ENCODE measurements at regions of chr4 and their contacts with region 1.

Region 1: GRCh38 chr4:92305148-92305877 is 1.5 kb downstream of the GRID2 start:
- DNase-seq: peak; percentile 78 to 93
- H3K4me3 ChIP-seq: peak overlapping the region; percentile 74 to 79 (median 78)
- H3K27ac ChIP-seq: peak overlapping the region; percentile 41; the same call in 1 of the 2 replicates
- H3K4me1 ChIP-seq: peaks cover 0 to 5% (median 4%) of the 10 kb centered on the region in 4 experiments; a peak in 5 of 7 replicates
- H3K27me3 ChIP-seq: no peaks in the 10 kb centered on the region
- CTCF ChIP-seq: peak in 1 of 3 experiments; percentile 17; a peak in 1 of 4 replicates
- EP300 ChIP-seq: no peak
- POLR2A ChIP-seq: peak in 1 of 2 experiments; percentile 69; a peak in 2 of 3 replicates
- RAD21 ChIP-seq: peak; percentile 3 to 30; a peak in 3 of 4 replicates

Region 2: DNA sequence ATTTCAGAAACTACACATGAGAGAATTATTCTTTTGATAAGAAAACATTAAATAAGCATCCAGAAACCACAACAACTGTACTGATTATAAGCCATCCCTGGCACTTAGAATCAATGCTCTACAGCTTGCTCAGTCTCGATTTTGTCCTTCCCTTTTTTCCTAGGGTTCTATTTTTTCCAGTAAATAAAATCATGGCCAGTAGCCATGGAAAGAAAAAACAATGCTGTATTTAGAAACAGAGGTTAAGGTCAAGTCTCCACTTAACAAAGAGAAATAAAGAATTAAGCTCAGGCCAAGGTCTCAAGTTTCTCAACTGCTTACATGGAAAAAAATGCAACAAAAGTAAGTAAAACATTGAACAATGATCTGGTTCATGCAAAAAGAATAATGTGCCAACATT is 40.3 kb before region 1 on chr4:
- CTCF ChIA-PET with region 1: no interaction called
- POLR2A ChIA-PET with region 1: interaction called, 19 read pairs
- DNase-seq: no peak
- H3K4me3 ChIP-seq: no peak overlapping the region
- H3K27ac ChIP-seq: no peak overlapping the region
- H3K4me1 ChIP-seq: no peaks in the 10 kb centered on the region; a peak in 1 of 7 replicates
- H3K27me3 ChIP-seq: peaks cover 0 to 2% (median 0%) of the 10 kb centered on the region in 4 experiments; a peak in 1 of 7 replicates
- CTCF ChIP-seq: no peak
- EP300 ChIP-seq: no peak
- POLR2A ChIP-seq: no peak
- RAD21 ChIP-seq: no peak

Region 3: GRCh38 chr4:92270908-92271307 is 34.4 kb before region 1 on chr4:
- CTCF ChIA-PET with region 1: interaction called, 9 read pairs
- POLR2A ChIA-PET with region 1: interaction called, 19 read pairs
- DNase-seq: no peak
- H3K4me3 ChIP-seq: peak overlapping the region; percentile 12 to 56 (median 24); a peak in 7 of 8 replicates
- H3K27ac ChIP-seq: peak overlapping the region; percentile 64; the same call in 1 of the 2 replicates
- H3K4me1 ChIP-seq: no peaks in the 10 kb centered on the region; a peak in 2 of 7 replicates
- H3K27me3 ChIP-seq: no peaks in the 10 kb centered on the region
- CTCF ChIP-seq: peak in 2 of 3 experiments; percentile 57 to 73; a peak in 3 of 4 replicates
- EP300 ChIP-seq: no peak
- POLR2A ChIP-seq: no peak; a peak in 1 of 3 replicates
- RAD21 ChIP-seq: peak; percentile 76 to 82

Region 4: DNA sequence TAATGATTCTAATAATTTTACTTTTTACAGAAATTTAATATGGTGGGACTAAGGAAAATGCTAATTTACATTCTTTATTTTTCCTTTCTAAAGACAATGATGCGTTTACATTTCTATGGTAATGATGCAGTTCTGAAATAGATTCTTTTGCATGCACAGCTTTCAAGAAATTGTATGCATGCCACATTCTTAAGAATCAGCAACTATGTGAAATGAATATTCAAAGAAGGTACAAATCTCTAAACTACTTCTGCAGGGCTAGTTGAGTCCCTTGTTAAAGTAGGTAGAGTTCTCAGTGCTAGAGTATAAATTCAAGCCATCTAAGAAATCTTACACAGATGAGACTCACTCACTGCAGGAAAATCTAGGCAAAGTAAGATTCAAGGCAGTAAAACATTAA is 26.0 kb before region 1 on chr4:
- CTCF ChIA-PET with region 1: interaction called, 17 read pairs
- POLR2A ChIA-PET with region 1: interaction called, 36 read pairs
- DNase-seq: no peak
- H3K4me3 ChIP-seq: peak overlapping the region in 1 of 4 experiments; percentile 97; a peak in 3 of 8 replicates
- H3K27ac ChIP-seq: peak overlapping the region; percentile 6; the same call in 1 of the 2 replicates
- H3K4me1 ChIP-seq: peaks cover 0 to 12% (median 1%) of the 10 kb centered on the region in 4 experiments; a peak in 3 of 7 replicates
- H3K27me3 ChIP-seq: peaks cover 0 to 1% (median 0%) of the 10 kb centered on the region in 4 experiments; a peak in 1 of 7 replicates
- CTCF ChIP-seq: no peak
- EP300 ChIP-seq: no peak
- POLR2A ChIP-seq: no peak
- RAD21 ChIP-seq: no peak

Region 5: GRCh38 chr4:92317047-92317446 is 11.7 kb after region 1 on chr4:
- CTCF ChIA-PET with region 1: interaction called, 8 read pairs
- POLR2A ChIA-PET with region 1: interaction called, 10 read pairs
- DNase-seq: no peak
- H3K4me3 ChIP-seq: no peak overlapping the region
- H3K27ac ChIP-seq: no peak overlapping the region
- H3K4me1 ChIP-seq: no peaks in the 10 kb centered on the region
- H3K27me3 ChIP-seq: no peaks in the 10 kb centered on the region
- CTCF ChIP-seq: no peak
- EP300 ChIP-seq: no peak
- POLR2A ChIP-seq: no peak
- RAD21 ChIP-seq: no peak

Region 6: GRCh38 chr4:92357966-92358365 is 52.7 kb after region 1 on chr4:
- CTCF ChIA-PET with region 1: no interaction called
- POLR2A ChIA-PET with region 1: no interaction called
- DNase-seq: no peak
- H3K4me3 ChIP-seq: no peak overlapping the region
- H3K27ac ChIP-seq: no peak overlapping the region
- H3K4me1 ChIP-seq: peaks cover 0 to 9% (median 4%) of the 10 kb centered on the region in 4 experiments; a peak in 4 of 7 replicates
- H3K27me3 ChIP-seq: no peaks in the 10 kb centered on the region
- CTCF ChIP-seq: no peak
- EP300 ChIP-seq: no peak
- POLR2A ChIP-seq: no peak
- RAD21 ChIP-seq: no peak

Region 7: DNA sequence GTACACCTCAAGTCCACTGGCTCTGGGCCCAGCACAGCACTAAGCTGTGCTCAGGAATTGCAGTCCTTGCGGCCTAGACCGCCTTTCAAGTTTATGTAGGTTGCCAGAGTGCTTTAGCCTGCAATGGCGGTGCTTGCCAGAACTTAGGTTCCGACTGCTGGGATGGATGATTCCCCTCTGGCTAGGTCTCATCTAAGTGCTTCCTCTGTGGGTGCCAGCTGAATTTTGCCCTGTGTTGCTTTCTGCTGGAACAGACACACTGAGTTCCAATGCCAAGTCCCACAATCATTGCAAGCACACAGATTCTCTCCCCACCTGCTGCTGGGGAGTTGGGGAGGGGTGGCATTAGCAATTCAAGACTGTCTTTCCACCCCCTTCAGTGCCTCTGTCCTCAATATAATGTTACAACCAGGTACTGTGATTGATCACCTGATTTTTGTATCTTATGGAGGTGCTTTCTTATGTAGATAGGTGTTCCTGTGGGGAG is 128.0 kb after region 1 on chr4:
- CTCF ChIA-PET with region 1: interaction called, 3 read pairs
- POLR2A ChIA-PET with region 1: interaction called, 10 read pairs
- DNase-seq: peak in 1 of 2 experiments; percentile 47
- H3K4me3 ChIP-seq: peak overlapping the region in 1 of 4 experiments; percentile 14; a peak in 1 of 8 replicates
- H3K27ac ChIP-seq: peak overlapping the region; percentile 86
- H3K4me1 ChIP-seq: peaks cover 14 to 31% (median 21%) of the 10 kb centered on the region in 4 experiments
- H3K27me3 ChIP-seq: no peaks in the 10 kb centered on the region
- CTCF ChIP-seq: no peak
- EP300 ChIP-seq: peak in 1 of 2 experiments; percentile 62; a peak in 1 of 3 replicates
- POLR2A ChIP-seq: peak; percentile 32 to 37; a peak in 2 of 3 replicates
- RAD21 ChIP-seq: no peak

Region 8: DNA sequence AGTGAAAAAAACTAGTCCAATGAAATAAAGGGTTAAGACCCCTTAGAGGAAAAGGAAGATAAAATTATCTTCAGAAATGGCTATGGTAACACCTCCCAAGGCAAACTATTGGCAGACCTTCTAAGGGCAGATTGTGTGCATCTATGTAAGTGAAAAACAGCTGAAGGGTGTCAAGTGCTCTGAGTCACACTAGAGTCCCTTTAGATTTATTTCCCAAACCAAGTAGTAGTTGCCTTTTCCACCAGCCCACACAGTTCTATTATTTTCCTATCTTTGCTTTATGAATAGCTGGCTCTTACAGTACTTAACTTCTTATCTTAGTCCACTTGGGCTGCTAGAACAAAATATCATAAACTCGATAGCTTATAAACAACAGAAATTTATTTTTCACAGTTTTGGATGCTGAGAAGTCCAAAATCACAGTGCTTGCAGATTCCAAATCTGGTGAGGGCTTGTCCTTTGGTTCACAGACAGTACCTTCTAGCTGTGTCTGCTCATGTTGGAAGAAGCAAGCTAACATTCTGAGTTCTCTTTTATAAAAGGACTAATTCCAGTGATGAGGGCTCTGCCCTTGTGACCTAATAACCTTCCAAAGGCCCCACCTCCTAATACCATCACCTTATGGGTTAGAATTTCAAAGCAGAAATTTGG is 142.1 kb after region 1 on chr4:
- CTCF ChIA-PET with region 1: no interaction called
- POLR2A ChIA-PET with region 1: interaction called, 15 read pairs
- DNase-seq: no peak
- H3K4me3 ChIP-seq: peak overlapping the region in 1 of 4 experiments; percentile 66; a peak in 2 of 8 replicates
- H3K27ac ChIP-seq: no peak overlapping the region
- H3K4me1 ChIP-seq: peaks cover 0 to 36% (median 13%) of the 10 kb centered on the region in 4 experiments; a peak in 6 of 7 replicates
- H3K27me3 ChIP-seq: no peaks in the 10 kb centered on the region
- CTCF ChIP-seq: no peak
- EP300 ChIP-seq: no peak
- POLR2A ChIP-seq: no peak
- RAD21 ChIP-seq: no peak